Endothelial cell of umbilical vein (primary cell): ENCODE measurements at regions of chr11 and their contacts with region 1.

Region 1: GRCh38 chr11:36746886-36747710 is 149.1 kb upstream of the RAG2 start:
- DNase-seq: peak; percentile 89
- H3K4me3 ChIP-seq: no peak overlapping the region
- H3K27ac ChIP-seq: no peak overlapping the region
- H3K4me1 ChIP-seq: no peaks in the 10 kb centered on the region
- H3K27me3 ChIP-seq: no peaks in the 10 kb centered on the region
- CTCF ChIP-seq: peak; percentile 97 to 98
- POLR2A ChIP-seq: no peak

Region 2: DNA sequence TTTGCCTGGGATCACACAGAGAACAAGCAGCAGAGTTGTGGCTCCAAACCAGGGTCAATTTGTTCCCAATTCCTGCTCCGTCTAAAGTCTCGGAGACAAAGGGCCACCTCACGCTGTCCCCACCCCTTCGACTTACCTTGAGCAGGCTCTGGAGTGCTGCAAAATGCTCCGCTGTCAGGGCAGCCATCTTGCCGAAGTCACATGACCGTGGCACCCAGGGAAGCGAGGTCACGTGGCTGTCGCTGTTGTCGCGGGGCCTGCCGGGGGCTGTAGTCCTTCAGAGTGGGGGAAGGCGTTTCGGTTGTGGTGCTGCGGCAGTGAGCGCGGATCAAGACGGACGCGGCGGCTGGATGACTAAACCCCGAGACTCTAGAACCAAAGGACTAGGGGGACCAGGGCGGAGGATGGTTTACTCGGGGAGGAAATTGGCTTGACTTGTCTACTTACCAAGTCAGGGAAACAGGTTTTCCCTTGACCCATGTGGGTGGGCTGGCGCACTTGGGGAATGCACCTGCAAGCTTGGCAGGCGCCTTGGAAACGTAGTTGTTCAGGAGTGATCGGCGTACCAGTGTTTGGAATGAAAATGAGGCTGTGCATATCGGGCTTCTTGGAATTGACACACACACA is 457.8 kb before region 1 on chr11 and contains the start of gene COMMD9:
- CTCF ChIA-PET with region 1: interaction called, 4 read pairs
- POLR2A ChIA-PET with region 1: no interaction called
- dilution Hi-C with region 1: no loop called
- intact Hi-C with region 1: loop called (anchors 1 kb)
- DNase-seq: peak; percentile 93
- H3K4me3 ChIP-seq: peak within 1 kb of the TSS; percentile 73 to 95 (median 75)
- H3K27ac ChIP-seq: peak within 1 kb of the TSS; percentile 32
- H3K4me1 ChIP-seq: peaks cover 9% of the 10 kb centered on the region
- H3K27me3 ChIP-seq: no peaks in the 10 kb centered on the region
- CTCF ChIP-seq: no peak
- POLR2A ChIP-seq: peak; percentile 77
- total RNA-seq, gene COMMD9: 78.9 and 79.0 TPM in 2 replicates

Region 3: DNA sequence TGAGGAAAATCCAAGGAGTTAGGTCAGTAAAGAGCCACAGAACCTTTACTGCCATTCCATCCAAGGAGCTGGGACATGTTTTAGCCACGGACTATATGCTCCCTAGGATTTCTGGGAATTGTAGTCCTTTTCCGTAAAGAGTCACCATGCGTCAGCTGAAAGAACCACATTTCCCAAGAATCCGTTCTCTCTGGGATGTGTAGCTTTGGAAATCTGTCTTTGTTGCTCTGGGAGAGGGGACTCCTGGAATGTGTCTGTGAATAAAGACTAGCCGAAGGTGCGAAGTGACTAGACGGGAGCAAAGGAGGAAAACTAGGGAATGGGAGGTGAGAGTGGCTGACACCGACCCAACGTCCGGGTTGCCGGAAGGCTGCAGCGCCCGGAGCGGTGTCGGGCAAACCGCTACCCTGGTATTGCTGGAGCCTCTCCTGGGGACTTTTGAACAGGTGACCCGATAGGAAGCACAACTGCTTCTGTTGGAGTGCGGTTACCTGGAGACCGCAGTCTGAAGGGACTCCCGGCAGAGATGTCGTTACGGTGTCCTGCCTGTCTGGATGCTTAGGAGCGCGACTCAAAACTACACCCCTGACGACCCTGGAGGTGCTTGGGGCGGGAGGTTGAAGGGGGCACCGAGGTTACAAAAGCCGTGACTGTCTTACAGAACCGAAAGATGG is 152.6 kb before region 1 on chr11 and contains the start of gene IFTAP:
- CTCF ChIA-PET with region 1: interaction called, 6 read pairs
- POLR2A ChIA-PET with region 1: no interaction called
- dilution Hi-C with region 1: no loop called
- intact Hi-C with region 1: loop called (anchors 1 kb)
- DNase-seq: peak; percentile 94
- H3K4me3 ChIP-seq: peak within 1 kb of the TSS; percentile 80 to 89 (median 87)
- H3K27ac ChIP-seq: peak within 1 kb of the TSS; percentile 6
- H3K4me1 ChIP-seq: peaks cover 5% of the 10 kb centered on the region
- H3K27me3 ChIP-seq: peaks cover 4 to 18% of the 10 kb centered on the region in 2 experiments
- CTCF ChIP-seq: no peak
- POLR2A ChIP-seq: peak; percentile 44
- total RNA-seq, gene IFTAP: 19.5 and 19.6 TPM in 2 replicates

Region 4: DNA sequence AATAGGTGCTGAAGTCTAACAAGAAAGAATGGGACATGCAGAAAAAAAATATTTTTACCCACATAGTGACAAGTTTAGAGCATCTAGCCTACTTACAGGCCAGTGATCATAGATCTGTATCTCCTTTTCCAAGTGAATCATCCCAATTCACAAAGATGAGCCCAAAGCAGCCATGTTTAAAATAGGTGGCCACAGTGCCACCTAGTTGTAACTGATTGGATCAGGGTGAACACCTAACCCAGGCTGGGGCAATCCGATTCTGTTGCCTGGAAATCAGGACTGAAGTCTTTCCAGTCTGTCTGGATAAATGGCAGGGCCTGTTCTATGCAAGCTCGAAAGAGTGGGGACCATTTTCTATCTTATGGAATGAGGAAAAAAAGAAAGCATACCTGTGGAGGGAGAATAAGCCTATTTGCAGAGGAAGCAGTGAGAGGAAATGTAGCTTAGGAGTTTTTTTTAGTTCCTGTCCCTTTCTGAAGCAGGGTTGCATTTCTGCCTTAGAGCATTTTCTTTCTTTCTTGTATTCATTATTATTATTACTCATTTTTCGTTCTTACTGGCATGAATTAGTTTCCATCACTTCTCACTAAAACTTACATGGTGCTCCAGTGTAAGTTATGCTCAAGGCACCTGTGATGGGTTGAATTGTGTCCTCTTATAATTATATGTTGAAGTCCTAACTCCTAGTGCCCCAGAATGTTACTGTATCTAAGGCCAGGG is 35.8 kb before region 1 on chr11:
- CTCF ChIA-PET with region 1: interaction called, 21 read pairs
- POLR2A ChIA-PET with region 1: no interaction called
- dilution Hi-C with region 1: no loop called
- intact Hi-C with region 1: no loop called
- DNase-seq: no peak
- H3K4me3 ChIP-seq: no peak overlapping the region
- H3K27ac ChIP-seq: no peak overlapping the region
- H3K4me1 ChIP-seq: no peaks in the 10 kb centered on the region
- H3K27me3 ChIP-seq: no peaks in the 10 kb centered on the region
- CTCF ChIP-seq: no peak
- POLR2A ChIP-seq: no peak

Region 5: GRCh38 chr11:36729825-36730224 is 17.3 kb before region 1 on chr11:
- CTCF ChIA-PET with region 1: interaction called, 23 read pairs
- POLR2A ChIA-PET with region 1: no interaction called
- dilution Hi-C with region 1: no loop called
- intact Hi-C with region 1: no loop called
- DNase-seq: no peak
- H3K4me3 ChIP-seq: no peak overlapping the region
- H3K27ac ChIP-seq: no peak overlapping the region
- H3K4me1 ChIP-seq: no peaks in the 10 kb centered on the region
- H3K27me3 ChIP-seq: no peaks in the 10 kb centered on the region
- CTCF ChIP-seq: no peak
- POLR2A ChIP-seq: no peak

Region 6: DNA sequence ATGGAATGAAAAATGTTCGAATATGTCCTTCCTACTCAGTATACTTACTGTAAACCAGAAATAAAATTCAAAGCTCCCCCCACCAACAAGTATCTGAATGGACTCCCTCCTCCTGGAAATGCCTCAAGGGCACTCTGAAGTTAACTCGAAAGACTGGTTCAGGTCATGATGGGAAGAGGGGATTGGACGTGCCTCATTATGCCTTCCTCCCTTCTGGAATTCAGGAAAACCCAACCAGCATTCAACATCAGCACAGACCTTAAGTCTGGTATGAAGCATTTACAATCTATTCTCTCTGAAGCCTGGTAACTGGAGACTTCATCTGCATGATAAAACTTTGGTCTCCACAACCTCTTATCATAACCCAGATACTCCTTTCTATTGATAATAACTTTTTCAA is 279.2 kb after region 1 on chr11:
- CTCF ChIA-PET with region 1: no interaction called
- POLR2A ChIA-PET with region 1: no interaction called
- dilution Hi-C with region 1: no loop called
- intact Hi-C with region 1: no loop called
- DNase-seq: no peak
- H3K4me3 ChIP-seq: no peak overlapping the region
- H3K27ac ChIP-seq: no peak overlapping the region
- H3K4me1 ChIP-seq: no peaks in the 10 kb centered on the region
- H3K27me3 ChIP-seq: no peaks in the 10 kb centered on the region
- CTCF ChIP-seq: no peak
- POLR2A ChIP-seq: no peak